CD4-positive, alpha-beta memory T cell (primary cell): ENCODE measurements at regions of chr18 and their contacts with region 1.

Region 1: GRCh38 chr18:35005963-35006577 is 35.1 kb upstream of the MAPRE2 start:
- DNase-seq: peak; percentile 35 to 63 (median 51)
- H3K4me3 ChIP-seq: no peak overlapping the region
- H3K4me3 Mint-ChIP-seq: no peak overlapping the region
- H3K27ac ChIP-seq: no peak overlapping the region
- H3K27ac Mint-ChIP-seq: no peak overlapping the region
- H3K4me1 ChIP-seq: no peaks in the 10 kb centered on the region
- H3K4me1 Mint-ChIP-seq: no peaks in the 10 kb centered on the region
- H3K27me3 ChIP-seq: no peaks in the 10 kb centered on the region
- H3K27me3 Mint-ChIP-seq: peaks cover 0 to 3% of the 10 kb centered on the region in 2 donors

Region 2: GRCh38 chr18:35143622-35144596 is 137.8 kb after region 1 on chr18:
- CTCF ChIA-PET with region 1: interaction called, 68 read pairs
- POLR2A ChIA-PET with region 1: no interaction called
- intact Hi-C with region 1: loop called (anchors 1 kb)
- DNase-seq: peak; percentile 22 to 48 (median 39)
- H3K4me3 ChIP-seq: no peak overlapping the region
- H3K4me3 Mint-ChIP-seq: no peak overlapping the region
- H3K27ac ChIP-seq: no peak overlapping the region
- H3K27ac Mint-ChIP-seq: peak overlapping the region in 2 of 7 donors; percentile 1 to 43
- H3K4me1 ChIP-seq: no peaks in the 10 kb centered on the region
- H3K4me1 Mint-ChIP-seq: peaks cover 0 to 1% (median 0%) of the 10 kb centered on the region in 4 donors
- H3K27me3 ChIP-seq: no peaks in the 10 kb centered on the region
- H3K27me3 Mint-ChIP-seq: no peaks in the 10 kb centered on the region

Region 3: GRCh38 chr18:35355140-35355618 is 349.1 kb after region 1 on chr18:
- CTCF ChIA-PET with region 1: interaction called, 11 read pairs
- POLR2A ChIA-PET with region 1: no interaction called
- intact Hi-C with region 1: loop called (anchors 1 kb)
- DNase-seq: peak; percentile 54 to 63 (median 60)
- H3K4me3 ChIP-seq: no peak overlapping the region
- H3K4me3 Mint-ChIP-seq: no peak overlapping the region
- H3K27ac ChIP-seq: no peak overlapping the region
- H3K27ac Mint-ChIP-seq: peak overlapping the region in 1 of 7 donors; percentile 19
- H3K4me1 ChIP-seq: no peaks in the 10 kb centered on the region
- H3K4me1 Mint-ChIP-seq: peaks cover 0 to 2% (median 0%) of the 10 kb centered on the region in 4 donors
- H3K27me3 ChIP-seq: no peaks in the 10 kb centered on the region
- H3K27me3 Mint-ChIP-seq: peaks cover 0 to 2% of the 10 kb centered on the region in 2 donors